ENCODE measurements at regions of chr4 and their contacts with region 1.

Region 1: DNA sequence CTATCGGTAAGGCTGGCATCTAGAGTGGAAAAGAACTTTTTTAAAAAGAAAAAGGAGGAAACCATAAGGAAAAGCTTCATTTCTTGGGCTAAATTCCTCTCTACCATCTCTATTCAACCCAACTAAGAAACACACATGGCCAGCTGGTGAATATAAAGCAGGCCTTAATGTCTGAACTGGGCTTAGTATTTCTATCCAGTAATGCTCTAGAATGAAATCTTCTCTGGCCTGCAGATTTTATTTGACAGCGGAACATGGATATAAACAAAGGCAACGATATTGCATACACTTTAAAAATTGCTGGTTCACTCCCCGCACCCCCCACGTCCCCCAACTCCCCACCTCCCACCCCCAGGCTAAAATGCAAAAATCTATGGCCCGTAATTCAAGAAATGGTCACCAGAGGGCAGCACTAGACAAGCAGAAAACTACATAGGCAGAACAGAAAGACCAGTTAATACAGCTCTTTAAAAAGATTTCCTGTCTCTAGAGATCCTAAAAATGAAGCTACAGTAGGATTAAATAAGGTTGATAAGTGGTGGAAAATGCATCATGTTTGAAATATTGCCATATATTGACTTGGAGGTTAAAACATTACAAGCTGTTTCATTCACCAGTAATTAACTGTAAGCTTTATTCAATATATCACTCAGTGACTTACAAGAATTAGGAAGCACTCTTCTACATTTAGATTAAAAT is 155.2 kb upstream of the GALNT7 start:
- DNase-seq: peak; percentile 65
- ATAC-seq: peak; percentile 42
- H3K4me3 Mint-ChIP-seq: no peak overlapping the region
- H3K27ac Mint-ChIP-seq: no peak overlapping the region
- H3K4me1 Mint-ChIP-seq: peaks cover 3% of the 10 kb centered on the region
- H3K27me3 Mint-ChIP-seq: no peaks in the 10 kb centered on the region

Region 2: DNA sequence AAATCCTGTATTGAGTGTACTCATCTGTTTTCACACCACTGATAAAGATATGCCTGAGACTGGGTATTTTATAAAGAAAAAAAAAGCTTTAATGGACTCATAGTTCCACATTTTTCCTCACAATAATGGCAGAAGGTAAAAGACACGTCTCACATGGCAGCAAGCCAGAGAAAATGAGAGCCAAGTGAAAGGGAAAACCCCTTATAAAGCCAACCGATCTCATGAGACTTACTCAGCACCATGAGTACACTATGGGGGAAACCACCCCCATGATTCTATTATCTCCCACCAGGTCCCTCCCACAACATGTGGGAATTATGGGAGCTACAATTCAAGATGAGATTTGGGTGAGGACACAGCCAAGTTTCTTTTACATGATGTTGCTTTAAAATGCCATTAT is 1028.3 kb before region 1 on chr4:
- CTCF ChIA-PET with region 1: no interaction called
- POLR2A ChIA-PET with region 1: no interaction called
- intact Hi-C with region 1: no loop called
- DNase-seq: no peak
- ATAC-seq: no peak
- H3K4me3 Mint-ChIP-seq: no peak overlapping the region
- H3K27ac Mint-ChIP-seq: no peak overlapping the region
- H3K4me1 Mint-ChIP-seq: no peaks in the 10 kb centered on the region
- H3K27me3 Mint-ChIP-seq: no peaks in the 10 kb centered on the region

Region 3: DNA sequence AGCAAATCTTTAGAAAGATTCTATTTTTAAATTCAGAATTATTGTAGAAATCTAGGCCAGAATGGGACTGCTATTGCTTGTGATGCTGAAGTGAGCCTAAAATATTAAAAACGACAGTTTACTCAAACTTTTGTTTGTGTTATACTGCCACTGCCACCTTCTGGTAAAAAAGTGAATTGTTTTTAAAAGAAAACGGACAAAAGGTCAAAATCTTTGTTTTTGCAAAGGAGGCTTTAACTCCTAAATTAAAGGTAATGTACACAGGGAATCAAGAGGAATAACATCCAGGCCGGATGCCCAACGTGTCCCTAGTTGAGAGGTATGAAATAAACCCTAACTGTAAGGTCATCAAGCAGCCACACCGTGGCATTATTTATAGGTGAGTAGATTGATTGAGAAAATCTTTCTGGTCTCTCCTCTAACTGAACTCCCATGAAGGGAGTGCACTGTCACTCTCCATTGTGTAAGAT is 183.1 kb before region 1 on chr4:
- CTCF ChIA-PET with region 1: no interaction called
- POLR2A ChIA-PET with region 1: no interaction called
- intact Hi-C with region 1: no loop called
- DNase-seq: no peak
- ATAC-seq: no peak
- H3K4me3 Mint-ChIP-seq: no peak overlapping the region
- H3K27ac Mint-ChIP-seq: no peak overlapping the region
- H3K4me1 Mint-ChIP-seq: no peaks in the 10 kb centered on the region
- H3K27me3 Mint-ChIP-seq: peaks cover 5% of the 10 kb centered on the region

Region 4: DNA sequence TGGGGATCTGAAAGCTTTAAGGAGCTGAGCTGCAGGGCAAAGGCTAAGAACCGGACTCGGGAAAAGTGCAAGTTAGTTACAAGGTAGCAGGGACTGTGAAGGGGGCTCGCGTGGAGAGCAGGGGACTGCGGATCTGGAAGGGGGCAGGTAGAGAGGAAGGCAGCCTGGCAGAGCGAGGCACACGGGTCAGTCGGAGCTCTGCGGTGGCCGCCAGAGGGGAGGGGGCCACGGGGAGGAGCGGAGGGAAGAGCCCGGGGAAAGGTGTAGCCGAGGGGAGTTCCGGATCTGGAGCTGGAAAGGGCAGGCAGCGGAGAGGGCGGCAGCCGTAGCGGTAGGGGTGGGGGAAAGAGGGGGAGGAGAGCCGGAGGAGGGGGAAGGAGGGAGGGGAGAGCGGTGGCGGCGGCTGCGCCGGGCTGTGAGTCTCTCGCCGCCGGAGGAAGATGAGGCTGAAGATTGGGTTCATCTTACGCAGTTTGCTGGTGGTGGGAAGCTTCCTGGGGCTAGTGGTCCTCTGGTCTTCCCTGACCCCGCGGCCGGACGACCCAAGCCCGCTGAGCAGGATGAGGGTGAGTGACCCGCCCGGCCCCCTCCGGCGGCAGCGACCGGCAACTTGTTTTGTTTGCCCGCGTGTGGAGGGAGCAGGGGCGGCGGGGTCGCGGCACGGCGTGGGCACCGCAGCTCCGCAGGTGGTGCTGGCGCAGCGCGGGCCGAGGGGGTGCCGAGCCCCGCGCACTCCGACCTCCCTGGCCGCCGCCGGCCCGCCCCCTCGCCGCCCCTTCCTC is 155.2 kb after region 1 on chr4 and contains the start of gene GALNT7:
- CTCF ChIA-PET with region 1: interaction called, 3 read pairs
- POLR2A ChIA-PET with region 1: interaction called, 3 read pairs
- intact Hi-C with region 1: loop called in 1 of 2 experiments (anchors 5 kb)
- DNase-seq: peak; percentile 83
- ATAC-seq: peak; percentile 57
- H3K4me3 Mint-ChIP-seq: peak within 1 kb of the TSS; percentile 92
- H3K27ac Mint-ChIP-seq: peak within 1 kb of the TSS; percentile 89
- H3K4me1 Mint-ChIP-seq: peaks cover 42% of the 10 kb centered on the region
- H3K27me3 Mint-ChIP-seq: no peaks in the 10 kb centered on the region
- total RNA-seq, gene GALNT7: 11.4 to 15.1 TPM

Region 5: GRCh38 chr4:173257732-173258717 is 244.6 kb after region 1 on chr4:
- CTCF ChIA-PET with region 1: interaction called, 80 read pairs
- POLR2A ChIA-PET with region 1: no interaction called
- intact Hi-C with region 1: loop called (anchors 1 kb)
- DNase-seq: peak; percentile 76
- ATAC-seq: peak; percentile 94
- H3K4me3 Mint-ChIP-seq: no peak overlapping the region
- H3K27ac Mint-ChIP-seq: no peak overlapping the region
- H3K4me1 Mint-ChIP-seq: peaks cover 7% of the 10 kb centered on the region
- H3K27me3 Mint-ChIP-seq: no peaks in the 10 kb centered on the region

Region 6: GRCh38 chr4:173301518-173302201 is 288.3 kb after region 1 on chr4:
- CTCF ChIA-PET with region 1: interaction called, 74 read pairs
- POLR2A ChIA-PET with region 1: no interaction called
- intact Hi-C with region 1: loop called (anchors 1 kb)
- DNase-seq: peak; percentile 31
- ATAC-seq: peak; percentile 81
- H3K4me3 Mint-ChIP-seq: no peak overlapping the region
- H3K27ac Mint-ChIP-seq: no peak overlapping the region
- H3K4me1 Mint-ChIP-seq: peaks cover 2% of the 10 kb centered on the region
- H3K27me3 Mint-ChIP-seq: no peaks in the 10 kb centered on the region

Region 7: GRCh38 chr4:173420324-173420752 is 407.0 kb after region 1 on chr4:
- CTCF ChIA-PET with region 1: interaction called, 11 read pairs
- POLR2A ChIA-PET with region 1: no interaction called
- intact Hi-C with region 1: loop called (anchors 1 to 2 kb)
- DNase-seq: no peak
- ATAC-seq: no peak
- H3K4me3 Mint-ChIP-seq: no peak overlapping the region
- H3K27ac Mint-ChIP-seq: no peak overlapping the region
- H3K4me1 Mint-ChIP-seq: peaks cover 8% of the 10 kb centered on the region
- H3K27me3 Mint-ChIP-seq: no peaks in the 10 kb centered on the region

Region 8: DNA sequence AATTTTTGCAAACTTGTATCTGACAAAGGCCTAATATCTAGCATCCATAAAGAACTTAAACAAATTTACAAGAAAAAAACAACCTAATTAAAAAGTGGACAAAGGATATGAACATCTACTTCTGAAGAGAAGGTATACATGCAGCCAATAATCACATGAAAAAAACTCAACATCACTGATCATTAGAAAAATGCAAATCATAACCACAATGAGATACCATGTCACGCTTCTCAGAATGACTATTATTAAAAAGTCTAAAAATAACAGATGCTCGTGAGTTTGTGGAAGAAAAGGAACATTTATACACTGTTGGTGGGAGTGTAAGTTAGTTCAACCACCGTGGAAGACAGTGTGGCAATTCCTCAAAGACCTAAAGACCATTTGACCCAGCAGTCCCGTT is 1294.3 kb after region 1 on chr4:
- CTCF ChIA-PET with region 1: no interaction called
- POLR2A ChIA-PET with region 1: no interaction called
- intact Hi-C with region 1: no loop called
- DNase-seq: no peak
- ATAC-seq: no peak
- H3K4me3 Mint-ChIP-seq: no peak overlapping the region
- H3K27ac Mint-ChIP-seq: no peak overlapping the region
- H3K4me1 Mint-ChIP-seq: no peaks in the 10 kb centered on the region
- H3K27me3 Mint-ChIP-seq: no peaks in the 10 kb centered on the region

Measured in activated CD4-positive, alpha-beta T cell treated with anti-CD3 and anti-CD28 coated beads for 36 hours (primary cell).